ENCODE measurements at regions of chr4 and their contacts with region 1.

Region 1: DNA sequence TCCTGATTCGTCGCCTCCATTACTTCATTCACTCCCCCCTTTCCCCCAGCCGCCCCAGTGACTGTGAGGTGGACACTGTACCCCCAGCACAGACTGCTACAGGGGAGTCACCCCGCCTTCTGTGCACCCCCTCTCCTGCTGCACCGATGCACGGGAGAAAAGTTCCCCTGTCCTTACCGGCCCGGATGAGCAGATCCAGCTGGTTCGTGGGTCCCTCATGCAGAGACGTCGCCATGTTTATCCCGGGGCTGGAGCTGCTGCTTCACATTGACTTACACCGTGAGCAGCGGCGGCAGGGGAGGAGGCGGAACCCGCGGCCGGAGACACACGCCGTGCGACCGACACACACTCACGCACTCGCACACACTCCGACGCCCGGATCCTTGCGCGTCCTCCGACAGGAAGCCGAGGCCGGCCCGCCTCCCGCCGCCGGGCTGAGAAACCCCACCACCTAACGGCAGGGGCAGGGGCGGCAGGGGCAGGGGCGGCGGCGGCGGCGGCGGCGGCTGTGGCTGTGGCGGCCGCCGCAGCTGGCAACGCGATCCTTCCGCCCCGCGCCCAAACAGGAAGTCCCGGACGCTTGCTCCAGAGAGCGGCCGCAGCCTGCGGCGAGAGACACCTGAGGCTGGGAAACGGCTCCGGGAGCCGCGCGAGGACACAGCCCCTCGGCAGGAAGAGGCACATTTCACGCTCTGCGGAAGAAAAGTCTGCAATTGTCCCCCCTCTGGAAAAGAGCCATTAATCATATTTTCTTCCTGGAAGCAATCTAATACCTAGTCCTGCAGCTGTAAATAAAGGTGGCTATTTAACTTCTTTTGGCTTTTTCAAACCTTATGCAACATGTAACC is 68.6 kb downstream of the NOCT start:
- DNase-seq: peak; percentile 85
- H3K4me3 ChIP-seq: peak overlapping the region; percentile 74 to 80 (median 79)
- H3K27ac ChIP-seq: peak overlapping the region; percentile 85
- H3K4me1 ChIP-seq: no peaks in the 10 kb centered on the region
- H3K27me3 ChIP-seq: no peaks in the 10 kb centered on the region
- CTCF ChIP-seq: peak in 1 of 2 donors; percentile 17

Region 2: DNA sequence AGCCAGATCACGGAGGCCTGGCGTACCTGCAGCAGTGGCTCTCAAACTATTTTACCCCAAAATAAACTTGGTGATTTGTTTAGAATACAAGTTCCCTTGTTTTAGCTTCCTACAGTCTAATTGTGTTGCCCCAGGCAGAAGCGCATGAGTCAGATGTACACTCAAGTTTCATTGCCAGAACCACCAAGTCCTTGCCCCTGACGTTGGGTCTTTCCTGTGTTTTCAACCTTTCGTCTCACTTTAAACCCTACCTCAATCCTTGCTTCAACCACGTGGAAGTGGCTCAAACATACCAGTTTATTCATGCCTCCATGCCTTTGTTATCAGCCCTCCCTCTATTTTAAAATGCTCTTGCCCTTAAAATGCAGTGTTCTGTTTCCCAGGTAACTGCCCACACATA is 775.8 kb before region 1 on chr4:
- CTCF ChIA-PET with region 1: interaction called, 15 read pairs
- dilution Hi-C with region 1: no loop called
- in situ Hi-C with region 1: no loop called
- intact Hi-C with region 1: no loop called
- DNase-seq: peak; percentile 99
- H3K4me3 ChIP-seq: peak overlapping the region in 1 of 3 experiments; percentile 32
- H3K27ac ChIP-seq: peak overlapping the region; percentile 98
- H3K4me1 ChIP-seq: peaks cover 43% of the 10 kb centered on the region
- H3K27me3 ChIP-seq: no peaks in the 10 kb centered on the region
- CTCF ChIP-seq: no peak

Region 3: GRCh38 chr4:139015269-139015947 is 68.8 kb before region 1 on chr4 and contains the start of gene NOCT:
- CTCF ChIA-PET with region 1: no interaction called
- dilution Hi-C with region 1: no loop called
- in situ Hi-C with region 1: no loop called
- intact Hi-C with region 1: loop called (anchors 5 kb)
- DNase-seq: peak; percentile 93
- H3K4me3 ChIP-seq: peak within 1 kb of the TSS; percentile 53 to 100 (median 91)
- H3K27ac ChIP-seq: peak within 1 kb of the TSS; percentile 97
- H3K4me1 ChIP-seq: peaks cover 39% of the 10 kb centered on the region
- H3K27me3 ChIP-seq: no peaks in the 10 kb centered on the region
- CTCF ChIP-seq: no peak
- total RNA-seq, gene NOCT: 20.6 to 34.8 TPM

Region 4: GRCh38 chr4:139137763-139138162 is 53.6 kb after region 1 on chr4:
- CTCF ChIA-PET with region 1: no interaction called
- dilution Hi-C with region 1: no loop called
- in situ Hi-C with region 1: no loop called
- intact Hi-C with region 1: no loop called
- DNase-seq: no peak
- H3K4me3 ChIP-seq: no peak overlapping the region
- H3K27ac ChIP-seq: no peak overlapping the region
- H3K4me1 ChIP-seq: no peaks in the 10 kb centered on the region
- H3K27me3 ChIP-seq: no peaks in the 10 kb centered on the region
- CTCF ChIP-seq: no peak

Region 5: DNA sequence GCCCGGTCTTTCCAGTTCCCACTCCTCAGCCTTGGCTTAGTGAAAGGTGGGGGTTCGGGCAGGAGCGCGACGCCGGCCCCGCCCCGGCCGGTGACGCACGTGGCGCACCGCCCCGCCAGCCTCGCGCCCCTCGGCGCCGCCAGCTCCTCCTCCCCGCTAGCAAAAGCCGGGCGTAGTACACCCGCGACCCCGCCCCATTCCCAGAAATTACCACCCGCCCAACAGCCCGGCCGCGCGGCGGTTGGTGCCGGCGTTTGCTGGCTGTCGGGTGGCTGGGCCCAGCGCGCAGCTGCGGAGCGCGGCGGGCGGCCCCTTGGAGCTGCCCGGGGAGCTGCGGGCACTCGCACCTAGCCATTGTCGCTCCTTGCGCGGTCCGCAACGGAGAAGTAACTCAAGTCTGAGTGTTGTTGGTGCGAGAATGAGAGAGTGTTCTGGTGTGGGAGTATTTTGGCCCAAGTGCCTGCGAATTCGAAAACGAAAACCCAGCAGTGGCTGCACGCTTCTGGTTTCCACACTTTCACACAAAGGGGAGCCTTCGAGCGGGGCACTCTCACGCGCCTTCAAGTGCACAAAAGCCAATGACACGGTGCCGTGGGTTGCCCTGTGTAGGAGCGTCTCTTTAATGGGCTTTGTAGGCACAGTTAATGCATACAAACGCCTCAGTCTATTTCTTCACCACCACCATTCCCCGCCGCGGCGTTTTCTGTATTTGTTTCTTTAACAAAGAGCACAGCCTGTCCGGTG is 93.9 kb after region 1 on chr4:
- CTCF ChIA-PET with region 1: no interaction called
- dilution Hi-C with region 1: no loop called
- in situ Hi-C with region 1: no loop called
- intact Hi-C with region 1: loop called (anchors 5 kb)
- DNase-seq: peak; percentile 93
- H3K4me3 ChIP-seq: peak overlapping the region; percentile 72 to 84 (median 80)
- H3K27ac ChIP-seq: peak overlapping the region; percentile 78
- H3K4me1 ChIP-seq: peaks cover 5% of the 10 kb centered on the region
- H3K27me3 ChIP-seq: no peaks in the 10 kb centered on the region
- CTCF ChIP-seq: no peak

Region 6: GRCh38 chr4:139453371-139454110 is 369.4 kb after region 1 on chr4:
- CTCF ChIA-PET with region 1: no interaction called
- dilution Hi-C with region 1: no loop called
- in situ Hi-C with region 1: no loop called
- intact Hi-C with region 1: loop called (anchors 5 kb)
- DNase-seq: peak; percentile 97
- H3K4me3 ChIP-seq: peak overlapping the region; percentile 65 to 97 (median 84)
- H3K27ac ChIP-seq: peak overlapping the region; percentile 75
- H3K4me1 ChIP-seq: peaks cover 14% of the 10 kb centered on the region
- H3K27me3 ChIP-seq: no peaks in the 10 kb centered on the region
- CTCF ChIP-seq: no peak

Measured in mammary epithelial cell (primary cell).